Gastrocnemius medialis (tissue), 4 donors: ENCODE measurements at regions of chr4 and their contacts with region 1.

Region 1: GRCh38 chr4:56977321-56978012 is at the start of gene NOA1:
- DNase-seq: peak; percentile 96 to 98
- ATAC-seq: peak; percentile 87 to 93
- H3K4me3 ChIP-seq: peak within 1 kb of the TSS; percentile 81 to 95 (median 90)
- H3K27ac ChIP-seq: peak within 1 kb of the TSS; percentile 81 to 94 (median 91)
- H3K4me1 ChIP-seq: peaks cover 41 to 53% of the 10 kb centered on the region in 2 donors
- H3K27me3 ChIP-seq: no peaks in the 10 kb centered on the region
- CTCF ChIP-seq: peak in 1 of 5 experiments; percentile 1
- POLR2A ChIP-seq: peak; percentile 67 to 73
- total RNA-seq, gene NOA1: 20.3 to 34.5 (median 23.2) TPM

Region 2: DNA sequence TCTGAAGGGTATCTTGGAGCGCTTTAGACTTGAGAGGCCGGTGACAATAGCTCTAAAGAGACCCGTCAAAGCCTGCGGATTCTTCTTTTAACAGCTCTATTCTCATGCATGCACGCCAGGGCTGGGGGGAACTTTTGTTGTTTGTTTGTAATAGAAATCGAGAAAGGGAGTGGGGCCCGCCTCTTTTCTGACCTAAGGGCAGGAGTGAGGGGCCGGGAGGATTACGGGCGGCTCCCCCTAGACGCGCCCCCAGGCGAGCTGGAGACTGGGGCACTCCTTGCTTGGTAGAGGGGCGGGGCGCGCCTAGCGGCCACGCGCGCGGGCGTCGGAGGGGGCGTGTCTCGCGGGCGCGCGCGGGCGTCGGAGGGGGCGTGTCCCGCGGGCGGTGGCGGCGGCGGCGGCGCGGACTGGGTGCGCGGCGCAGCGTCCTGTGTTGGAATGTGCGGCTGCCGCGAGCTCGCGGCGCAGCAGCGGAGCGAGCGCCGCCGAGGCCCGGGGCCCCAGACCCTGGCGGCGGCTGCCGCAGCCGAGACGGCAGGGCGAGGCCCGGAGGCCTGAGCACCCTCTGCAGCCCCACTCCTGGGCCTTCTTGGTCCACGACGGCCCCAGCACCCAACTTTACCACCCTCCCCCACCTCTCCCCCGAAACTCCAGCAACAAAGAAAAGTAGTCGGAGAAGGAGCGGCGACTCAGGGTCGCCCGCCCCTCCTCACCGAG is 69.8 kb before region 1 on chr4 and contains the start of gene REST:
- in situ Hi-C with region 1: loop called in 3 of 4 experiments (anchors 5 to 10 kb)
- intact Hi-C with region 1: loop called (anchors 1 kb)
- DNase-seq: peak; percentile 41 to 61
- ATAC-seq: peak; percentile 77 to 78
- H3K4me3 ChIP-seq: peak within 1 kb of the TSS; percentile 61 to 98 (median 90)
- H3K27ac ChIP-seq: peak within 1 kb of the TSS; percentile 85 to 94 (median 89)
- H3K4me1 ChIP-seq: peaks cover 12 to 16% of the 10 kb centered on the region in 2 donors
- H3K27me3 ChIP-seq: no peaks in the 10 kb centered on the region
- CTCF ChIP-seq: no peak
- POLR2A ChIP-seq: peak; percentile 69 to 73
- total RNA-seq, gene REST: 17.9 to 22.6 (median 20.0) TPM

Region 3: GRCh38 chr4:56958111-56958517 is 19.4 kb before region 1 on chr4:
- in situ Hi-C with region 1: no loop called
- intact Hi-C with region 1: loop called (anchors 1 kb)
- DNase-seq: peak; percentile 68 to 91
- ATAC-seq: peak; percentile 99 to 100
- H3K4me3 ChIP-seq: peak overlapping the region; percentile 0 to 24 (median 17)
- H3K27ac ChIP-seq: peak overlapping the region; percentile 27 to 69 (median 64)
- H3K4me1 ChIP-seq: peaks cover 6 to 7% of the 10 kb centered on the region in 2 donors
- H3K27me3 ChIP-seq: no peaks in the 10 kb centered on the region
- CTCF ChIP-seq: no peak
- POLR2A ChIP-seq: no peak